ENCODE measurements at regions of chr11 and their contacts with region 1.

Region 1: DNA sequence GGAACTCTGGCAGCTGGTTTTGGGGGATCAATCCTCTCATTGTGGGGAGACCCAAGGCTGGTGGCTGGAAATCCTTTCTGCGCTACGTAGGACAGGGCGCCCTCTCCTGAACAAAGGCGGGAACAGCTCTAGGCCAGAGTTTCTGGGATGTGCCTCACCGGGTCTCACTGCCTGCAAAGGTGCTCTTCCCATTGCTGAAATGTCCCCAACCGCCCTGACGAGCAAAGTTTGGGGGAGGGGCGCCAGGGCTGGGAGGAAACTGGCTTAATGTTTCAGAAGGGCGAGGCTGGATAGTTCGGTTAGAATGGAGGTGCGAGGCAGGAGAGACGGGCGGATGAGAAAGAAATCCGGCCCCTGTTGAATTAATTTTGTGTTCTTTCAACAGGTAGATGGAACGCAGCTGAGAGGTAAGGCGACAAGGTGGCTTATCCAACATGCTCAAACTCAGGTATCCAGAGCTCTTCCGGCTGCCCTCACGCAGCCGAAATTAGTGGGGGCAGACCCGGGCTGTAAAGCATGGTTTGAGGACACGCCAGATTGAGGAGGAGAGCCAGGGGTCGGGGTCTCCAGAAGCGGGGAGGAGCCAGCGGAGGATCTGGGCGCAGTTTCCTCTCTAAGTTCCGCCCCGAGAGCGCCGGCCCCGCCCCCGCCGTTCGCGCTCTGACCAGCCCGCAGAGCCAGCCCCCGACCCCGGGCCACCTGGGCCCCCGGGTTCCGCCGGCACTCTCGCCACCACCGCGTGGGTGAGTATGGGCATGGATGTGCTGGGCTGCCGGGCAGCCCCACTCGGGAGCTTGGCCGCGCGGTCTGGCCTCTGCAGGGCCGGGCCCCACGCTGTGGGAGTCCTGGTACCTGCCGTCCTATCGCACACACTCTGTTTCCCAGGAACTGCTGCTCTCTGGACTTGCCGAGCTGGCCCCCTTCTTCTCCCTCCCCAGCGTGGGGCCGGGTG is at the start of gene PGAP2:
- DNase-seq: peak; percentile 64
- ATAC-seq: peak; percentile 87
- H3K4me3 Mint-ChIP-seq: peak within 1 kb of the TSS; percentile 93
- H3K27ac Mint-ChIP-seq: peak within 1 kb of the TSS; percentile 85
- H3K4me1 Mint-ChIP-seq: peaks cover 21% of the 10 kb centered on the region
- H3K27me3 Mint-ChIP-seq: no peaks in the 10 kb centered on the region
- total RNA-seq, gene PGAP2: 23.8 to 25.7 TPM

Region 2: DNA sequence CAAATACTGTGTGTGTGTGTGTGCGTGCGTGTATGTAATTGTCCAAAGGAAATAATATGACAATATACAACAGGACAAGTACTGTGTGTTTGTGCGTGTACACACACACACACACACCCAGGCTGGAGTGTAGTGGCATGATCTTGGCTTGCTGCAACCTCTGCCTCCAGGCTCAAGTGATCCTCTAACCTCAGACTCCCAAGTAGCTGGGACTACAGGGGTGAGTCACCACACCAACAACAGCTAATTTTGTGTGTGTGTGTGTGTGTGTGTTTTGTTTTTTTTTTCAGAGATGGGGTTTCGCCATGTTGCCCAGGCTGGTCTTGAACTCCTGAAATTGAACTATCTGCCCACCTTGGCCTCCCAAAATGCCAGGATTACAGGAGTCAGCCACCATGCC is 72.4 kb before region 1 on chr11:
- CTCF ChIA-PET with region 1: interaction called, 21 read pairs
- POLR2A ChIA-PET with region 1: no interaction called
- DNase-seq: no peak
- ATAC-seq: no peak
- H3K4me3 Mint-ChIP-seq: no peak overlapping the region
- H3K27ac Mint-ChIP-seq: no peak overlapping the region
- H3K4me1 Mint-ChIP-seq: no peaks in the 10 kb centered on the region
- H3K27me3 Mint-ChIP-seq: no peaks in the 10 kb centered on the region

Region 3: GRCh38 chr11:3767536-3767935 is 40.6 kb before region 1 on chr11:
- CTCF ChIA-PET with region 1: interaction called, 17 read pairs
- POLR2A ChIA-PET with region 1: interaction called, 3 read pairs
- DNase-seq: no peak
- ATAC-seq: no peak
- H3K4me3 Mint-ChIP-seq: no peak overlapping the region
- H3K27ac Mint-ChIP-seq: no peak overlapping the region
- H3K4me1 Mint-ChIP-seq: no peaks in the 10 kb centered on the region
- H3K27me3 Mint-ChIP-seq: no peaks in the 10 kb centered on the region

Region 4: DNA sequence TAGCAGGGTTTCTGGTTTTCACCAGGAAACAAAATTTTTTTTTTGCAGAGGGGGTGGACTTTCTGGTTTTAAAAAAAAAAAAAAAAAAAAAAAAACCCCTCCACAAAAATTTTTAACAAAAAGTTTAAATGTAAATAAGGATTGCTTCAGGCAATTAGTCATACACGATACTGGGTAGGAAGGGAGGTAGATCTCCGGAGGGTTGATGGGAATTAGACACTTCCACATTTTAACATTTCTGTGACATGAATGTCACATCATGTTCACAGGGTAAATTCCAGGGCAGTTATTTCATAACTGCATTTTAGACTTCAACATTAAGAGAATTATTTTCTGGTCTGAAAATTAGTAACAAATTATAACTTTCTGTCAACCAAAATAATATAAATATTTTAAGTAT is 26.8 kb before region 1 on chr11:
- CTCF ChIA-PET with region 1: interaction called, 87 read pairs
- POLR2A ChIA-PET with region 1: interaction called, 4 read pairs
- DNase-seq: no peak
- ATAC-seq: no peak
- H3K4me3 Mint-ChIP-seq: no peak overlapping the region
- H3K27ac Mint-ChIP-seq: peak overlapping the region; percentile 10
- H3K4me1 Mint-ChIP-seq: peaks cover 46% of the 10 kb centered on the region
- H3K27me3 Mint-ChIP-seq: no peaks in the 10 kb centered on the region

Region 5: GRCh38 chr11:3834664-3835461 is 26.7 kb after region 1 on chr11:
- CTCF ChIA-PET with region 1: interaction called, 22 read pairs
- POLR2A ChIA-PET with region 1: interaction called, 14 read pairs
- DNase-seq: no peak
- ATAC-seq: no peak
- H3K4me3 Mint-ChIP-seq: peak overlapping the region; percentile 61
- H3K27ac Mint-ChIP-seq: peak overlapping the region; percentile 84
- H3K4me1 Mint-ChIP-seq: peaks cover 86% of the 10 kb centered on the region
- H3K27me3 Mint-ChIP-seq: no peaks in the 10 kb centered on the region

Region 6: GRCh38 chr11:3865388-3866193 is 57.4 kb after region 1 on chr11:
- CTCF ChIA-PET with region 1: no interaction called
- POLR2A ChIA-PET with region 1: no interaction called
- DNase-seq: no peak
- ATAC-seq: no peak
- H3K4me3 Mint-ChIP-seq: peak overlapping the region; percentile 42
- H3K27ac Mint-ChIP-seq: peak overlapping the region; percentile 77
- H3K4me1 Mint-ChIP-seq: peaks cover 88% of the 10 kb centered on the region
- H3K27me3 Mint-ChIP-seq: no peaks in the 10 kb centered on the region

Region 7: GRCh38 chr11:3939211-3939610 is 131.0 kb after region 1 on chr11:
- CTCF ChIA-PET with region 1: no interaction called
- POLR2A ChIA-PET with region 1: no interaction called
- DNase-seq: no peak
- ATAC-seq: no peak
- H3K4me3 Mint-ChIP-seq: no peak overlapping the region
- H3K27ac Mint-ChIP-seq: no peak overlapping the region
- H3K4me1 Mint-ChIP-seq: peaks cover 83% of the 10 kb centered on the region
- H3K27me3 Mint-ChIP-seq: no peaks in the 10 kb centered on the region

Region 8: DNA sequence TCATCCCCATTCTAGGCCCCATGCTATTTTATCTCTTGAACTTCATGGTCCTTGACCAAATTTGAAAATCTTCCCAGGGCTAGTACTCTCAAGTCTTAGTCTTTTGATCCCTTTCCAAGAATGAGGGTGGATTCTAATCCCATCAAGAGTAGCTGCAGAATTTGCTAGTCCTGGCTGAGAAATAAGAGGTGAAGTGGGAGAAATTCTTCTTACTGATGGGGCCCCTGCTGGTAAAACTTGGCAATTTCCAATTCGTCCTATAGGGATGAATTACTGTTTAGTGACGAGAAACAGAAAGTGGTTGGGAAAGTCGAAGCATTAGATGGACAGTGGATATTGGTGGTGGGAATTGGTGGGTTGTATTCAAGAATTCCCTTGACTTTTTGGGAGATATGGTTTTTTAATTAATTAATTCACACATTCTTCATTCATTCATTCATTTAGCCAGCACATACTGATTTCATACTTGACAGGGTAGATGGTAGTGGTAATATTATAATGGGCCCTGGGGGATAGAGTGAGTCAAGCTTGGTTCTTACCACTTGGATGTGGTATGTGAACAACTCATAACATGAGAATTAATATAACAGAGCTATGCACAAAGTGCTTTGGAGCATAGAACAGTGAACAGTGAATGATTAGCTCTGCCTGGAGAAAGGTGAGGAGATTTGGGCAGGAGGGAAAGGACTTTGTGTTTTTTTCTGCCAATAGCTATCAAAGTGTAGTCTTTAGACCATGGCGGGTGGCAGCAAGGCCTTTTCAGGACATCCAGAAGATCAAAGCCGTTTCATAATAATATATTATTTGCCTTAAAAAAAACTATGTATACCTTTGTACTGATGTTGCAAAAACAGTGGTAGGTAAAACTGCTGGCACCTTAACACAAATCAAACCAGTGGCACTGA is 151.1 kb after region 1 on chr11:
- CTCF ChIA-PET with region 1: no interaction called
- POLR2A ChIA-PET with region 1: no interaction called
- DNase-seq: no peak
- ATAC-seq: no peak
- H3K4me3 Mint-ChIP-seq: no peak overlapping the region
- H3K27ac Mint-ChIP-seq: no peak overlapping the region
- H3K4me1 Mint-ChIP-seq: peaks cover 67% of the 10 kb centered on the region
- H3K27me3 Mint-ChIP-seq: no peaks in the 10 kb centered on the region

Measured in activated CD8-positive, alpha-beta T cell treated with anti-CD3 and anti-CD28 coated beads, Interleukin-2, amount 10 ng/mL, durations not matched to agents 7 days and 5 days (primary cell).